SK-N-SH (cell line): ENCODE measurements at regions of chr7 and their contacts with region 1.

Region 1: DNA sequence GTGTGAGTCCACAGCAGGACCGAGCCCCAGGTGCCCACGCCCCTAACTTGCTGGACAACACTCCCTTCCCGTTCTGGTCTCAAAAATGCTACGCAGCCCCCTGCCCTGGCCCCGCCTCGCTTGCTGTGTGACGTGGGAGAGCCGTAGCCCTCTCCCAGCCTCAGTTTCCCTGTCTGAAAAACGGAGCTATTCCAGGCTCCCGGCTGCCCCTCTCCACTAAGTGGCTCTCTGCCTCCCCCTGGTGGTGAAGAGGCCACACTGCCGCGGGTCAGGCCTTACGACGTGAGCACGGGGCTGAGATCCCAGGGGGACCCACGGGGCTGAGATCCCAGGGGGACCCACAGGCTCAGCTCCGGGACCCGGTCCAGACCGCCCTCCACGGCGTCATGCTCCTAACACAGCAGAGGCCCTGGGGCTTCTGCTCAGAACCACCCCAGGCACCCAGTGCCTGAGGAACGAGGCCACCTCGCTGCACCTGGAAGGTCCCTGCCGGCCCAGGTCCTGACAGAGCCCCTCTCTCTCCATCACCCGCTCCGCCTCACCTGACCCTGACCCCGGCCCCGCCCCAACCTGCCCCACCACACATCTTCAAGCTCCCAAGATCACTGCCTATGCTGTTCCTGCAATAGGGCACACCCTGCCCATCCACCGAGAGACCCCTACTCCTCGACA is 26.7 kb downstream of the MICALL2 start:
- DNase-seq: peak; percentile 94
- H3K4me3 ChIP-seq: no peak overlapping the region; a peak in 1 of 4 replicates
- H3K27ac ChIP-seq: no peak overlapping the region
- H3K4me1 ChIP-seq: no peaks in the 10 kb centered on the region
- H3K27me3 ChIP-seq: 0 out of 2 replicates have a peak, but pooled peaks cover 7% of the 10 kb centered on the region
- CTCF ChIP-seq: peak; percentile 99
- EP300 ChIP-seq: no peak
- RAD21 ChIP-seq: peak; percentile 81

Region 2: GRCh38 chr7:1175967-1176851 is 256.3 kb before region 1 on chr7:
- CTCF ChIA-PET with region 1: interaction called, 10 read pairs
- POLR2A ChIA-PET with region 1: no interaction called
- DNase-seq: peak; percentile 93
- H3K4me3 ChIP-seq: peak overlapping the region; percentile 4 to 36; a peak in 2 of 4 replicates
- H3K27ac ChIP-seq: no peak overlapping the region
- H3K4me1 ChIP-seq: peaks cover 0 to 2% of the 10 kb centered on the region in 2 experiments; a peak in 1 of 4 replicates
- H3K27me3 ChIP-seq: no peaks in the 10 kb centered on the region
- CTCF ChIP-seq: peak; percentile 91
- EP300 ChIP-seq: no peak
- RAD21 ChIP-seq: peak; percentile 74

Region 3: DNA sequence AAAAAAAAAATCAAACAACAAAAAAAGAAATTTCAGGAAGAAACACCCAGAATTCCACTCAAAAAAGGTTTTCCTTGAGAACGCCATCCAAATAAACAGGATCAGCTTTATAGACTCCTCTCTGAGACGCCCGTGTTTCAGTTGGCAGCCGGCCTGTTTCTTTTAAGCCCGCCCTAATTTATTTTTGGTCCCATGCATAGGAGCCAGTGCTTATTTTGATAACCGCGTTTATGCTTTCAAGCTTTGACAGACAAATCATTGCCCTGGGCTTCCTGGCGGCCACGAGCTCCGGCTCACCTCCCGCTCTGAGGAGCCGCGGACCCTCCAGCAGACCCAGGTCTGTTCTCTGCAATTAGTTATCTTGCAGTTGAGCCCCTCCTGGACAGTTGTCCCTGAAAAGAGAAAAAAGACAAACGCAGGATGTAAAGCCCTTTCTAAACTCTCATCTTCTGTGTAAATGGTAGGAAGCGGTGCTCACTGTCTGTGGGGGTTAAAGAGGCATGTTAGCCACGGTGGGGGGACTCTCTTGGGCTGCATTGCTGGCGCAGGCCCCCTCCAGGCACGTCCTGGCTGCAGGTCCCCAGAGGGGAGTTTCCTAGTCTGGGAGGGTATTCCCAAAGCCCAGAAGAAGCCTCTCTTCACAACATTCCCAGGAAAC is 222.1 kb before region 1 on chr7:
- CTCF ChIA-PET with region 1: interaction called, 20 read pairs
- POLR2A ChIA-PET with region 1: no interaction called
- DNase-seq: peak; percentile 64
- H3K4me3 ChIP-seq: no peak overlapping the region
- H3K27ac ChIP-seq: no peak overlapping the region
- H3K4me1 ChIP-seq: peaks cover 4 to 11% of the 10 kb centered on the region in 2 experiments; a peak in 1 of 4 replicates
- H3K27me3 ChIP-seq: peaks cover 99% of the 10 kb centered on the region
- CTCF ChIP-seq: no peak
- EP300 ChIP-seq: no peak
- RAD21 ChIP-seq: no peak

Region 4: GRCh38 chr7:1240517-1241257 is 191.9 kb before region 1 on chr7:
- CTCF ChIA-PET with region 1: interaction called, 14 read pairs
- POLR2A ChIA-PET with region 1: no interaction called
- DNase-seq: no peak
- H3K4me3 ChIP-seq: no peak overlapping the region
- H3K27ac ChIP-seq: no peak overlapping the region
- H3K4me1 ChIP-seq: no peaks in the 10 kb centered on the region
- H3K27me3 ChIP-seq: peaks cover 92% of the 10 kb centered on the region
- CTCF ChIP-seq: no peak
- EP300 ChIP-seq: no peak
- RAD21 ChIP-seq: no peak

Region 5: DNA sequence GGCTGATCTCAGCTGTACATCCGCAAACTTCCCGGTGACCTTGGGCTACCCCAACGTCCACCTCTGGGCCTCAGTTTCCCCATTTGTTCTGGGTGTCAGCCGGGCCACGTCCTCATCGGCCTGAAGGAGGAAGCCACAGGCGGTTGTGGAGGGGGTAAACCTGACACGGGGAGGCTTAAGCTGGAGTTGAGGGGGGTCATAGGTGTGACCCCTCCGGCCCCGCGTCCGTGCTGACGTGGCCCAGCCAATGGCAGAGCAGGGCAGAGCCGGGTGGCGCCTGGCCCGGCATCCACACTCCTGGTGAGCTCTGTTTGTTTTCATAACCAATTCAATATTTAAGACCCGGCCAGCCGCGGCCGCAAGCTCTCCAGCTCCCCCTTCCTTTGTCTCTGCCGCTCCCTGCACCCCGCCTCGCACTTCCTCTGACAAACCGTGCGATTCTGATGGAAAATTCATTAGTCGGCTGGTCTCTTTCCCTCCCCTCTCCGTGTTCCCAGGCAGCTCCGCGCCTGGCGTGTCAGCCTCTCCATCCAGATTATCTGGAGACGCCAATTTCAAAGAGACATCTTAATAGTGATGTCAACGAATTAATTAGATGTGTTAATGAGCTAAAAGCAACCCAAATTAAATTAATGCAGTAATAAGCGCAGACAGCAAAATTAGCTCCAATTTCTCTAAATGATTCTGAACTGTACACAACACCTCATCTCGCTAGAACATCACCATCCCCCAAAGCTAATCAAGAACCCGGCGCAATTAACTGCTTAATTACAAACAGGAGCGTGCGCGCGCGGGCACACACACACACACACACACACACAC is 28.7 kb before region 1 on chr7:
- CTCF ChIA-PET with region 1: interaction called, 34 read pairs
- POLR2A ChIA-PET with region 1: no interaction called
- DNase-seq: peak; percentile 77
- H3K4me3 ChIP-seq: no peak overlapping the region
- H3K27ac ChIP-seq: no peak overlapping the region
- H3K4me1 ChIP-seq: no peaks in the 10 kb centered on the region; a peak in 1 of 4 replicates
- H3K27me3 ChIP-seq: peaks cover 99% of the 10 kb centered on the region
- CTCF ChIP-seq: peak; percentile 17; the same call in 1 of the 2 replicates
- EP300 ChIP-seq: no peak
- RAD21 ChIP-seq: no peak

Region 6: GRCh38 chr7:1447551-1448244 is 15.2 kb after region 1 on chr7:
- CTCF ChIA-PET with region 1: interaction called, 142 read pairs
- POLR2A ChIA-PET with region 1: interaction called, 4 read pairs
- DNase-seq: no peak
- H3K4me3 ChIP-seq: no peak overlapping the region
- H3K27ac ChIP-seq: no peak overlapping the region
- H3K4me1 ChIP-seq: peaks cover 0 to 1% of the 10 kb centered on the region in 2 experiments; a peak in 1 of 4 replicates
- H3K27me3 ChIP-seq: no peaks in the 10 kb centered on the region
- CTCF ChIP-seq: no peak
- EP300 ChIP-seq: no peak
- RAD21 ChIP-seq: no peak

Region 7: DNA sequence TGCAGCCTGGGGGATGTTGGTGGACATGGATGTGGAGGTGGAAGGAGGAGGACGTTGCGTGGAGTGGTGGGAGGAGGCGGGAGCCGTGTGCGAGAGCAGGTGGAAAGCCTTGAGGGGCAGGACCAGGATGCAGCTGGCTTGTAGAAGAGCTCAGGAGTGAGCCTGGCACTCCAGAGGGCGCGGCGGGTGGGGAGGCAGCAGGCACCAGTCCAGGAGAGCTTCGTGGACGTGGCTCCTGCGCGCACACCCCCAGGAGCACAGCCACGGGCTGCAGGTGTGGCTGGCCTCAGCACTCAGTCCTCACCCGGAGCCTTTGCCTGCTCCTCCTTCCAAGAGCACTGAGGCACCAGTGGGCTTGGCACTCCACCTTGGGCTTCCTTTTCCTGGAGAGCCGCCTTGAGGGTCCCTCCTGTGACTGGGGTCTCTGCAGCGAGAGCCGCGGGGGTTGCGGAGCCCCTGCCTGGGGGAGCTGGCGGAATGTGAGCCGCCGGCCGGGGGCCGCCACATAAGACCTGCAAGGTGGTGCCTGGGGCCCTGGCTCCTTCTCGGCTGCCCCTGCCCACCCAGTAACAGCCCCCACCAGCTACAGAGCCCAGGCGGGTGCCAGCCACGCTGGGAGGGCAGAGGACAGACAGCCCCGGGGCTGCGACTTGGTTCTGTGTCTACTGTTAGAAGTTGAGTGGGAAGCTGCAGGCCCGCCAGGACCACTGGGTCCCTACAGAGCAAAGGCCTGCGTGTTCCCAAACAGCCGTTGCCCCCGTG is 109.0 kb after region 1 on chr7:
- CTCF ChIA-PET with region 1: no interaction called
- POLR2A ChIA-PET with region 1: no interaction called
- DNase-seq: no peak
- H3K4me3 ChIP-seq: no peak overlapping the region
- H3K27ac ChIP-seq: no peak overlapping the region
- H3K4me1 ChIP-seq: peaks cover 16 to 28% of the 10 kb centered on the region in 2 experiments; a peak in 3 of 4 replicates
- H3K27me3 ChIP-seq: no peaks in the 10 kb centered on the region
- CTCF ChIP-seq: no peak
- EP300 ChIP-seq: no peak
- RAD21 ChIP-seq: no peak

Region 8: DNA sequence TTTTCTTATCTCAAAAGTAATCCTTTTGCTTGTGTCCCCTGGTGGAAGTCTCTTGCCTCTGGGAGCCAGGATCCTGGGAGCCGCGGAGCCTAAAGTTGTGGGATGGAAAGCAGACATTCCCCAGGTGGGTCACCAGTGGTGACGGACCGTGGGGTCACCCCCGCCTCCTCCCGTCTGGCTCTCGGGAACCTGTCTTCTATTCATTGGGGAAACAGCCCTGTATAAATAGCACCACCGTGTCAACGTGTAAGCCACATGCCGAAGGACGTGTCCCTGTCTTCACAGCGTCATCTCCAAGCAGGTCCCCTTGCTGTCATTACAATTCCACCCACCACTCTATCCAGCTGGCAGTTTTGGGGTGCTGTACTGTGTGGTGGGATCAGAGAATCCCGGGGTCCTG is 325.1 kb after region 1 on chr7:
- CTCF ChIA-PET with region 1: no interaction called
- POLR2A ChIA-PET with region 1: no interaction called
- DNase-seq: no peak
- H3K4me3 ChIP-seq: no peak overlapping the region
- H3K27ac ChIP-seq: no peak overlapping the region
- H3K4me1 ChIP-seq: no peaks in the 10 kb centered on the region
- H3K27me3 ChIP-seq: no peaks in the 10 kb centered on the region; the same call in 1 of the 2 replicates
- CTCF ChIP-seq: no peak
- EP300 ChIP-seq: no peak
- RAD21 ChIP-seq: no peak

Region 9: GRCh38 chr7:1899196-1899595 is 466.6 kb after region 1 on chr7:
- CTCF ChIA-PET with region 1: no interaction called
- POLR2A ChIA-PET with region 1: no interaction called
- DNase-seq: peak; percentile 77
- H3K4me3 ChIP-seq: no peak overlapping the region
- H3K27ac ChIP-seq: peak overlapping the region in 1 of 2 experiments; percentile 83; a peak in 1 of 4 replicates
- H3K4me1 ChIP-seq: peaks cover 0 to 56% of the 10 kb centered on the region in 2 experiments; a peak in 1 of 4 replicates
- H3K27me3 ChIP-seq: no peaks in the 10 kb centered on the region
- CTCF ChIP-seq: no peak
- EP300 ChIP-seq: no peak
- RAD21 ChIP-seq: peak; percentile 5; the same call in 1 of the 2 replicates